CD8-positive, alpha-beta T cell (primary cell): ENCODE measurements at regions of chr5 and their contacts with region 1.

Region 1: DNA sequence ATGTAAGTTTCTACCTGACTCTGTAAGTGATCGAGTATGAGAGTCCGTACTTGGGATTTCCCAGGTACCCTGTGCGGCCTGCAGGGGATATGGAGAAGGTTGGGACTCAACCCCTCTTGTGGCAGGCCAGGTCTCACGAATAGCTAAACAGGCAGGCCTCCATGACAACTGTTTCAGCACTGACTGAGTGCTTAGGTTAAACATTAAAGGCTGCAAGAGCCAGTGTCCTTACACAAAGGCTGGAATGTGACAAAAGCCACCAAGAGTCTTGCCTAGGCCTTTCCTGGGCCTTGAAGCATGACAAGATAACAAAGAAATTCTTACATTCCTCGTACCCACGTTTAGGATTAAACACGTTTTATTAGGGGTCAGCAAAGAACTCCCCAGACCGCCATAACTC is 58.6 kb downstream of the THBS4 start:
- DNase-seq: no peak
- ATAC-seq: no peak
- H3K4me3 ChIP-seq: no peak overlapping the region
- H3K4me3 Mint-ChIP-seq: no peak overlapping the region
- H3K27ac ChIP-seq: no peak overlapping the region
- H3K27ac Mint-ChIP-seq: peak overlapping the region; percentile 74
- H3K4me1 ChIP-seq: peaks cover 22% of the 10 kb centered on the region
- H3K4me1 Mint-ChIP-seq: peaks cover 35% of the 10 kb centered on the region
- H3K27me3 ChIP-seq: no peaks in the 10 kb centered on the region
- H3K27me3 Mint-ChIP-seq: no peaks in the 10 kb centered on the region
- CTCF ChIP-seq: no peak

Region 2: DNA sequence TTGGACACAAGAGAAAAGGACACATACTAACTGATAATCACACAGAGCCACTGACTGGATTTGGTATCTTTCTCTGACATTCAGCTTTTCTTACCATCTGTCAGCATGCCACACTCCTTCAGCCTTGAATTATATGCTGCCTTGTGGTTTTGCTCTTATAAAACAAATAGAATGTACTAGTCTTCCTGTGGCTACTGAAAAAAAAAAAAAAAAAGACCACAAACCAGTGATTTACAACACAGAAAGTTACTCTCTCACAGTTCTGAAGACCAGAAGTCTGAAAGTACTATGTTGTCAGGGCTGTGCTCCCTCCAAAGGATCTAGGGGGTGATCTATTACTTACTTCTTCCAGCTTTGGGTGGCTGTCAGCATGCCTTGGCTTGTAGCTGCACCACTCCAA is 23.6 kb after region 1 on chr5:
- CTCF ChIA-PET with region 1: interaction called, 10 read pairs
- POLR2A ChIA-PET with region 1: interaction called, 5 read pairs
- intact Hi-C with region 1: no loop called
- DNase-seq: peak in 1 of 9 experiments; percentile 26
- ATAC-seq: no peak
- H3K4me3 ChIP-seq: no peak overlapping the region
- H3K4me3 Mint-ChIP-seq: no peak overlapping the region
- H3K27ac ChIP-seq: no peak overlapping the region
- H3K27ac Mint-ChIP-seq: peak overlapping the region; percentile 89
- H3K4me1 ChIP-seq: peaks cover 36% of the 10 kb centered on the region
- H3K4me1 Mint-ChIP-seq: peaks cover 56% of the 10 kb centered on the region
- H3K27me3 ChIP-seq: no peaks in the 10 kb centered on the region
- H3K27me3 Mint-ChIP-seq: no peaks in the 10 kb centered on the region
- CTCF ChIP-seq: no peak

Region 3: GRCh38 chr5:80181618-80182211 is 87.9 kb after region 1 on chr5:
- CTCF ChIA-PET with region 1: interaction called, 11 read pairs
- POLR2A ChIA-PET with region 1: interaction called, 3 read pairs
- intact Hi-C with region 1: no loop called
- DNase-seq: peak in 7 of 9 experiments; percentile 42 to 85 (median 67)
- ATAC-seq: peak; percentile 32
- H3K4me3 ChIP-seq: peak overlapping the region in 1 of 2 experiments; percentile 3
- H3K4me3 Mint-ChIP-seq: peak overlapping the region; percentile 64
- H3K27ac ChIP-seq: peak overlapping the region; percentile 20 to 23
- H3K27ac Mint-ChIP-seq: peak overlapping the region; percentile 96
- H3K4me1 ChIP-seq: peaks cover 89% of the 10 kb centered on the region
- H3K4me1 Mint-ChIP-seq: peaks cover 87% of the 10 kb centered on the region
- H3K27me3 ChIP-seq: no peaks in the 10 kb centered on the region
- H3K27me3 Mint-ChIP-seq: no peaks in the 10 kb centered on the region
- CTCF ChIP-seq: no peak

Region 4: DNA sequence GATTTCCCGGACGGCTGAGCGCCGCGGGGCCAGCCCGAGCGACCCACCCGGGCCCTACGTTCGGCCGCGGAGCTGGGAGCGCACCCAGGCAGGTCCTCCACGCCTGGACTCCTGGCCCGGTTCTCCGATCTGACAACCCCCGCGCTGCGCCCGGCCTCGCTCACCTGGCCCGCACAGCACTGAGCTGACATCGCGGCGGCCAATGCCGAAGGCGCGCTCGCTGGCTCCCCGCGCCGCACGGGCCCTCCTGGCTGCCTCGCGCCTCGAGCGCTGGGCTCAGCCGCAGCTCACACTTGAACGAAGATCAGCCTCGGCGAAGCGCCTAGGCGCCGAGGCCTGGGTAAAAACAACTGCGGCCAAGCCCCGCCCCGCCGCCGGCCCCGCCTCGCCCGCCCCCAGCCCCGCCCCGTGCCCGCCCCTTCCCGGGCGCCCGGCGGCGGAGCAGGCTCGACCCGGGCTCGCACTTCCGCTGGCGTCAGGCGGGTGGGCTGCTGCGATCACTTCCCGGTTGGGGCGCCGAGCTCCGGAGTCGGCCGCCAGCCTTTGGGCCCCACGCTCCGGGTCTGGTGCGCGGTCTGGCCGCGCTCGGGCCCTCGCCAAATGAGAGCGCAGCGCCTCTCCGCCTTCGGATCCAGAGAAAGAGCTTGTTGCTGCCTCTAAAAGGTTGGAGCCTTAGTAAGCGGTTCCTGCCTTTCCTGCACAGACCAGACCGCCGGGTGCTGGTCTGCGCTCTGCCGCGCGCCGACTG is 162.1 kb after region 1 on chr5 and contains the start of gene SERINC5:
- CTCF ChIA-PET with region 1: interaction called, 12 read pairs
- POLR2A ChIA-PET with region 1: interaction called, 4 read pairs
- intact Hi-C with region 1: no loop called
- DNase-seq: peak; percentile 69 to 92 (median 83)
- ATAC-seq: peak; percentile 74
- H3K4me3 ChIP-seq: peak within 1 kb of the TSS; percentile 83 to 91
- H3K4me3 Mint-ChIP-seq: peak within 1 kb of the TSS; percentile 99
- H3K27ac ChIP-seq: peak within 1 kb of the TSS; percentile 89 to 94
- H3K27ac Mint-ChIP-seq: peak within 1 kb of the TSS; percentile 99
- H3K4me1 ChIP-seq: peaks cover 36% of the 10 kb centered on the region
- H3K4me1 Mint-ChIP-seq: peaks cover 57% of the 10 kb centered on the region
- H3K27me3 ChIP-seq: no peaks in the 10 kb centered on the region
- H3K27me3 Mint-ChIP-seq: no peaks in the 10 kb centered on the region
- CTCF ChIP-seq: no peak
- total RNA-seq, gene SERINC5: 112 to 117 TPM

Region 5: DNA sequence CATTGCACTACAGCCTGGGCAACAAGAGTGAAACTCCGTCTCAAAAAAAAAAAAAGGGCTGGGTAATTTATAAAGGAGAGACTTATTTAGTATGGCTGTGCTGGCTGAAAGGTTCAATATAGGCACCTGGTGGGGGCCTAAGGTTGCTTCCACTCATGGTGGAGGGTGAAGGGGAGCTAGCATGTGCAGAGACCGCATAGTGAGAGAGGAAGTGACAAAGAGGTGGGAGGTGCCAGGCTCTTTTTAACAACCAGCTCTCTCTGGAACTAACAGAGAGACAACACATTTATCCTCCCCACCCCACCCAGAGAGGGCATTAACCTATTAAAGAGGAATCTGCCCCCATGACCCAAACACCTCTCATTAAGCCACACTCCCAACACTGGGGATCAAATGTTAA is 190.9 kb after region 1 on chr5:
- CTCF ChIA-PET with region 1: interaction called, 12 read pairs
- POLR2A ChIA-PET with region 1: interaction called, 4 read pairs
- intact Hi-C with region 1: no loop called
- DNase-seq: peak in 6 of 9 experiments; percentile 19 to 56 (median 34)
- ATAC-seq: peak; percentile 90
- H3K4me3 ChIP-seq: no peak overlapping the region
- H3K4me3 Mint-ChIP-seq: no peak overlapping the region
- H3K27ac ChIP-seq: no peak overlapping the region
- H3K27ac Mint-ChIP-seq: no peak overlapping the region
- H3K4me1 ChIP-seq: peaks cover 10% of the 10 kb centered on the region
- H3K4me1 Mint-ChIP-seq: peaks cover 13% of the 10 kb centered on the region
- H3K27me3 ChIP-seq: no peaks in the 10 kb centered on the region
- H3K27me3 Mint-ChIP-seq: no peaks in the 10 kb centered on the region
- CTCF ChIP-seq: no peak